Panc1 (cell line): ENCODE measurements at regions of chr6 and their contacts with region 1.

Region 1: GRCh38 chr6:81718126-81718525 is 34.4 kb downstream of the TENT5A start:
- DNase-seq: no peak
- ATAC-seq: no peak
- H3K4me3 ChIP-seq: no peak overlapping the region
- H3K27ac ChIP-seq: no peak overlapping the region
- H3K4me1 ChIP-seq: no peaks in the 10 kb centered on the region
- H3K27me3 ChIP-seq: no peaks in the 10 kb centered on the region
- CTCF ChIP-seq: no peak

Region 2: DNA sequence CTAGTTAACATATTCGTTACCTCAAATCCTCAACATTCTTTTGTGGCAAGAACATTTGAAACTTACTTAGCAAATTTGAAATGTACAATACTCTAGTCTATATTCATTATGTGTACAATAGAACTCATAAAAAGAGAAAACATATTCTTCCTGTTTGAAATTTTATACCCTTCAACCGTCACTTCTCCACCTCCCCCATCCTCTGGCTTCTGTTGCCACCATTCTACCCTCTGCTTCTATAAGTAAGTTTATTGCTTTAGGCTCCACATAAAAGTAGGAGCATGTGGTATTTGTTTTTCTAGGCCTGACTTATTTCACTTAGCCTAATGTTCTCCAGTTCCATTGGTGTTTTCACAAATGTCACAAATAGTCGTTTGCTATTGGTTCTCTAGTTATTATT is 171.0 kb before region 1 on chr6:
- CTCF ChIA-PET with region 1: no interaction called
- POLR2A ChIA-PET with region 1: no interaction called
- in situ Hi-C with region 1: no loop called
- intact Hi-C with region 1: no loop called
- DNase-seq: no peak
- ATAC-seq: no peak
- H3K4me3 ChIP-seq: no peak overlapping the region
- H3K27ac ChIP-seq: no peak overlapping the region
- H3K4me1 ChIP-seq: no peaks in the 10 kb centered on the region
- H3K27me3 ChIP-seq: no peaks in the 10 kb centered on the region
- CTCF ChIP-seq: no peak

Region 3: GRCh38 chr6:81969814-81970213 is 251.7 kb after region 1 on chr6:
- CTCF ChIA-PET with region 1: no interaction called
- POLR2A ChIA-PET with region 1: interaction called, 14 read pairs
- in situ Hi-C with region 1: no loop called
- intact Hi-C with region 1: no loop called
- DNase-seq: no peak
- ATAC-seq: no peak
- H3K4me3 ChIP-seq: no peak overlapping the region
- H3K27ac ChIP-seq: no peak overlapping the region
- H3K4me1 ChIP-seq: no peaks in the 10 kb centered on the region
- H3K27me3 ChIP-seq: no peaks in the 10 kb centered on the region
- CTCF ChIP-seq: no peak